CD4-positive, alpha-beta T cell (primary cell): ENCODE measurements at regions of chr6 and their contacts with region 1.

Region 1: GRCh38 chr6:79777713-79778579 is 146.8 kb downstream of the SH3BGRL2 start:
- DNase-seq: peak; percentile 72 to 93 (median 78)
- ATAC-seq: peak; percentile 97
- H3K4me3 ChIP-seq: peak overlapping the region; percentile 51
- H3K4me3 Mint-ChIP-seq: peak overlapping the region; percentile 83
- H3K27ac ChIP-seq: no peak overlapping the region
- H3K27ac Mint-ChIP-seq: no peak overlapping the region
- H3K4me1 ChIP-seq: peaks cover 9% of the 10 kb centered on the region
- H3K4me1 Mint-ChIP-seq: peaks cover 8% of the 10 kb centered on the region
- H3K27me3 ChIP-seq: no peaks in the 10 kb centered on the region
- H3K27me3 Mint-ChIP-seq: no peaks in the 10 kb centered on the region
- CTCF ChIP-seq: peak; percentile 98

Region 2: GRCh38 chr6:79862711-79863110 is 84.8 kb after region 1 on chr6:
- CTCF ChIA-PET with region 1: interaction called, 8 read pairs
- POLR2A ChIA-PET with region 1: no interaction called
- intact Hi-C with region 1: loop called in 1 of 2 experiments (anchors 2 kb)
- DNase-seq: no peak
- ATAC-seq: no peak
- H3K4me3 ChIP-seq: no peak overlapping the region
- H3K4me3 Mint-ChIP-seq: no peak overlapping the region
- H3K27ac ChIP-seq: no peak overlapping the region
- H3K27ac Mint-ChIP-seq: no peak overlapping the region
- H3K4me1 ChIP-seq: no peaks in the 10 kb centered on the region
- H3K4me1 Mint-ChIP-seq: no peaks in the 10 kb centered on the region
- H3K27me3 ChIP-seq: no peaks in the 10 kb centered on the region
- H3K27me3 Mint-ChIP-seq: no peaks in the 10 kb centered on the region
- CTCF ChIP-seq: no peak

Region 3: GRCh38 chr6:80094017-80094416 is 316.1 kb after region 1 on chr6:
- CTCF ChIA-PET with region 1: no interaction called
- POLR2A ChIA-PET with region 1: no interaction called
- intact Hi-C with region 1: loop called (anchors 2 to 5 kb)
- DNase-seq: peak in 4 of 14 experiments; percentile 20 to 52 (median 48)
- ATAC-seq: no peak
- H3K4me3 ChIP-seq: no peak overlapping the region
- H3K4me3 Mint-ChIP-seq: no peak overlapping the region
- H3K27ac ChIP-seq: no peak overlapping the region
- H3K27ac Mint-ChIP-seq: no peak overlapping the region
- H3K4me1 ChIP-seq: no peaks in the 10 kb centered on the region
- H3K4me1 Mint-ChIP-seq: no peaks in the 10 kb centered on the region
- H3K27me3 ChIP-seq: no peaks in the 10 kb centered on the region
- H3K27me3 Mint-ChIP-seq: no peaks in the 10 kb centered on the region
- CTCF ChIP-seq: peak; percentile 78